HCT116 (cell line): ENCODE measurements at regions of chr14 and their contacts with region 1.

Region 1: DNA sequence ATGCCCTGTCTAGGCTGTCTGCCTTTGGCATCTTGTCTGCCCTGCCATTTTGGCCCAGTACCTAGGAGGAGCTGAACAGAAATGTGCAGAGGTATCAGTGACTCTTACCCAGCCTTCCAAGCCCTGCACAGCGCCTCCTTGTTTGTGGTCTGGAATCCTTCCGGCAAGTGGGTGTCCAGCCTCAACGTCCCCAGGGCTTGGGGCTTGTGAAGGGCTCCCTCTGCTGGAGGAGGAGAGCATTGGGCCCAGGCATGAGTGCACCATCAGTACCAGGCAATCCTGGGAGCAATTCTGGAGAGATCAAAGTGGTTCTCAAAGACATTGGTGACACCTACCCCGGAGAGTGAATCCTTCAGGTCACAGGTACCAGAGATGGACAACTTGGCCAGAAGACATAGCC is 2.4 kb upstream of the TCL1B start:
- DNase-seq: peak; percentile 32
- ATAC-seq: peak; percentile 89
- H3K4me3 ChIP-seq: no peak overlapping the region
- H3K27ac ChIP-seq: no peak overlapping the region
- H3K4me1 ChIP-seq: no peaks in the 10 kb centered on the region
- H3K27me3 ChIP-seq: peaks cover 5% of the 10 kb centered on the region
- CTCF ChIP-seq: peak; percentile 81 to 95 (median 86); a peak in 5 of 6 replicates
- POLR2A ChIP-seq: no peak
- RAD21 ChIP-seq: peak; percentile 65

Region 2: GRCh38 chr14:95442633-95443021 is 241.2 kb before region 1 on chr14:
- CTCF ChIA-PET with region 1: no interaction called
- POLR2A ChIA-PET with region 1: no interaction called
- RAD21 ChIA-PET with region 1: no interaction called
- intact Hi-C with region 1: loop called (anchors 5 kb)
- DNase-seq: peak; percentile 49
- ATAC-seq: peak; percentile 99
- H3K4me3 ChIP-seq: no peak overlapping the region
- H3K27ac ChIP-seq: no peak overlapping the region
- H3K4me1 ChIP-seq: peaks cover 0 to 7% of the 10 kb centered on the region in 2 experiments; a peak in 1 of 4 replicates
- H3K27me3 ChIP-seq: no peaks in the 10 kb centered on the region
- CTCF ChIP-seq: peak; percentile 85 to 91 (median 91)
- POLR2A ChIP-seq: no peak
- RAD21 ChIP-seq: peak; percentile 94

Region 3: DNA sequence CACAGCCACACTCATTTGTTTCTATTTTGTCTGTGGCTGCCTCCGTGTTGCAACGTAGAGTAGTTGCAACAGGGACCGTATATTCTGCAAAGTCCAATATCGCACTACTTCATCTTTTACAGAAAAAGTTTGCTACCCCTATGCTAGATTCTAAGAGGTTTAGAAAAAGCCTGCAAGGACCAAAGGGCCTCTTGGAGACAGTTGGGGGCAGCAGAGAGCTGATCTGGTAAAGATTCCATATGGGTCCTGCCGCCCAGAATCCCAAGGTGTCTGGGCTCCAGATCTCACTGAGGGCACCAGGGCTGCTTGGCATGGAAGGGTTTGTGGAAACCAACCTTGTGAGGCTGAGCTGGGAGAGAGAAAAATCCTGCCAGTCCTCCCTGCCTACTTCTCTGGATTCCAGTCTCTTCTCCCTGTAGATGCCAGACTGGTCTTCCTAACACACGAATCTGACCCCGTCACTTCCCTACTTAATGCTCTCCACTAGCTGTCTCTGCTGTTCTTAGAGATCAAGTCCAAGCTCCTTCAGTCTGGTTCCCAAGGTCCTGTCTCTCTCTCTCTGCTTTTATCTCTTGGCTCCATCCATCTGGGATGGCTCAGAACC is 74.3 kb before region 1 on chr14:
- CTCF ChIA-PET with region 1: no interaction called
- POLR2A ChIA-PET with region 1: no interaction called
- RAD21 ChIA-PET with region 1: no interaction called
- intact Hi-C with region 1: loop called (anchors 1 kb)
- DNase-seq: peak; percentile 42
- ATAC-seq: peak; percentile 89
- H3K4me3 ChIP-seq: no peak overlapping the region
- H3K27ac ChIP-seq: no peak overlapping the region
- H3K4me1 ChIP-seq: no peaks in the 10 kb centered on the region
- H3K27me3 ChIP-seq: peaks cover 80% of the 10 kb centered on the region
- CTCF ChIP-seq: peak; percentile 46 to 75 (median 68); a peak in 5 of 6 replicates
- POLR2A ChIP-seq: no peak
- RAD21 ChIP-seq: peak; percentile 60

Region 4: GRCh38 chr14:95623195-95623594 is 60.6 kb before region 1 on chr14:
- CTCF ChIA-PET with region 1: no interaction called
- POLR2A ChIA-PET with region 1: no interaction called
- RAD21 ChIA-PET with region 1: no interaction called
- intact Hi-C with region 1: no loop called
- DNase-seq: no peak
- ATAC-seq: no peak
- H3K4me3 ChIP-seq: no peak overlapping the region
- H3K27ac ChIP-seq: no peak overlapping the region
- H3K4me1 ChIP-seq: no peaks in the 10 kb centered on the region
- H3K27me3 ChIP-seq: peaks cover 26% of the 10 kb centered on the region; the same call in 1 of the 2 replicates
- CTCF ChIP-seq: no peak
- POLR2A ChIP-seq: no peak
- RAD21 ChIP-seq: no peak

Region 5: DNA sequence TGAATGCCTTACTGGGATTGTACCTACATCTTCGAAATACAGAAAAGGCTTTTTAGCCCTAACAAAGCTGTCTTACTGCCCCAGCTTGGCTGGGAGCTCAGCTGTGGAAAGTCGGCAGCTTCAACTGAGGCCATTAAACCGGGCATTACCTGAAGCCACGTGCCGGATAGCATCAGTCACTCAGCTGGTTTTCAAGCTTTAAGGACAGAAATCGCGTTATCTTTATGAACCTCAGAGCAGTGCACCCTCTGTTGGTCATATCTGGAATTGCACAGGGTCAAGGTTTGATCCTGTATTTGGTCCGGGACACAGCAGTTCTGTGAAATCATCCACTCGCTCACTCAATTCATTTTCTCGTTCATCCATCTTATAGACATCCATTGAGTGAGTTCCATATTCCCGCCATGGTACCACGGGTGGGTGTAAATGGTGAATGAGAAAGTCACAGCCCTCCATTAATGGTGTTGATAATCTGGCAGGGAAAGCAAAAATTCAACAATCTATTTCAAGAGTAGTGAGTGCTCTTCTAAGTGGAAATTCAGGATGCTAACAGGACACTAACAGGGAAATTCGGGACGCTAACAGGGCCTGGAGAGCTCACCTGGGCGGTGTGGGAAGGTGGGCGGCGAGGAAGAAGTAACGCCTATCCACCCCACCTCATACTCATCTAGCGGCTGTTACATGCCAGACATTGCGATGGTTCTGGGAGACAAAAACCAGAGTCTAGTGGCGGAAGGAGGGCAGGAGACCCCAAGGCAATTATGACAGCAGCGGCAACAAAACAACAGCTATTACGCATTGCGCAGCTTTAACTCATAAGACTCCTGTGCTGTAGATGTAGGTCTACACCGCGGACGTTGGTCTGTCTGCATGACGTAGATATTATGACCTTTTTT is 90.7 kb after region 1 on chr14:
- CTCF ChIA-PET with region 1: interaction called, 4 read pairs
- POLR2A ChIA-PET with region 1: no interaction called
- RAD21 ChIA-PET with region 1: no interaction called
- intact Hi-C with region 1: loop called (anchors 5 kb)
- DNase-seq: peak; percentile 56
- ATAC-seq: peak; percentile 70
- H3K4me3 ChIP-seq: no peak overlapping the region
- H3K27ac ChIP-seq: no peak overlapping the region
- H3K4me1 ChIP-seq: no peaks in the 10 kb centered on the region
- H3K27me3 ChIP-seq: peaks cover 7% of the 10 kb centered on the region; the same call in 1 of the 2 replicates
- CTCF ChIP-seq: peak; percentile 66 to 93 (median 91); a peak in 5 of 6 replicates
- POLR2A ChIP-seq: no peak
- RAD21 ChIP-seq: peak; percentile 63